Activated CD4-positive, alpha-beta memory T cell treated with anti-CD3 and anti-CD28 coated beads for 36 hours (primary cell): ENCODE measurements at regions of chr17 and their contacts with region 1.

Region 1: GRCh38 chr17:35747540-35748017 is 5.5 kb downstream of the GAS2L2 start:
- DNase-seq: peak; percentile 86
- H3K4me3 Mint-ChIP-seq: no peak overlapping the region
- H3K27ac Mint-ChIP-seq: no peak overlapping the region
- H3K4me1 Mint-ChIP-seq: peaks cover 5% of the 10 kb centered on the region
- H3K27me3 Mint-ChIP-seq: peaks cover 38% of the 10 kb centered on the region

Region 2: DNA sequence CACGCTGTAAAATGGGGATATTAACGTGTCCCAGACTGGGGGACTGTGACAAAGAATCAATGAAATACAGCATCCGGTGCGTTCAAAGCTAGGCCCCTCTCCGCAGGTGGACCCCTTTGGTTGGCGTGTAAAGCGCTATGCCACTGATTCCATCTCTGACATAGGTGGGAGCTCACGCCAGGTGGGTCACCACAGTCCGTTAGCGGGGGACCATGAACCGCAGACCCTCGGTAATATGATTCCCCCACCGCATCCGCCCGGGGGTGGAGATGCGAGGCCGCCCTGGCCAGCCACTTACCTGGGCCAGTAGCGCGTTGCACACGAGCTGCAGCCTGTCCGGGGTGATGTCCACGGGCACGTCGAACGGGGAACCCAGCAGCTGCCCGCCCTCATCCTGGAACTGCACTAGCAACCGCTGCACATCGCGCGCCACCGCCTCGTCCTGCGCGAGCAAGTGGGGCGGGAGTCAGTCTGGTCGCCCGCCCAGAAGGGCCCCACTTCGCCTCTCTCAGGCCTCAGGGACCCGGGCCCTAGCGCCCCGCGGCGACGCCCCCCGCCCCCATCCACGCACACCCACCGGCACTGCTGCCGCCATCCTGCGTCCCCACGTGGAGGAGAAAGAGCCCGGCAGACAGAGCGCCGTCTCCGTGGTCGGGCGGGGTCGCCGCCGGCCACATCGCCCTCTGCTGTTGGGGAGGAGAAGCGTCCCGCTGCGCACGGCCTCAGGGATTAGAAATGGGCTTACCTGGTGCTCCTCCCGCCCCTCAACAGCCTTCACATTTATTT is 605.7 kb before region 1 on chr17 and contains the start of gene NLE1:
- CTCF ChIA-PET with region 1: interaction called, 5 read pairs
- POLR2A ChIA-PET with region 1: no interaction called
- intact Hi-C with region 1: loop called (anchors 10 kb)
- DNase-seq: peak; percentile 93
- H3K4me3 Mint-ChIP-seq: peak within 1 kb of the TSS; percentile 79
- H3K27ac Mint-ChIP-seq: peak within 1 kb of the TSS; percentile 74
- H3K4me1 Mint-ChIP-seq: peaks cover 16% of the 10 kb centered on the region
- H3K27me3 Mint-ChIP-seq: no peaks in the 10 kb centered on the region
- total RNA-seq, gene NLE1: 29.9 to 31.4 TPM

Region 3: GRCh38 chr17:35603674-35604073 is 143.9 kb before region 1 on chr17:
- CTCF ChIA-PET with region 1: interaction called, 16 read pairs
- POLR2A ChIA-PET with region 1: no interaction called
- intact Hi-C with region 1: no loop called
- DNase-seq: no peak
- H3K4me3 Mint-ChIP-seq: no peak overlapping the region
- H3K27ac Mint-ChIP-seq: no peak overlapping the region
- H3K4me1 Mint-ChIP-seq: peaks cover 5% of the 10 kb centered on the region
- H3K27me3 Mint-ChIP-seq: no peaks in the 10 kb centered on the region

Region 4: DNA sequence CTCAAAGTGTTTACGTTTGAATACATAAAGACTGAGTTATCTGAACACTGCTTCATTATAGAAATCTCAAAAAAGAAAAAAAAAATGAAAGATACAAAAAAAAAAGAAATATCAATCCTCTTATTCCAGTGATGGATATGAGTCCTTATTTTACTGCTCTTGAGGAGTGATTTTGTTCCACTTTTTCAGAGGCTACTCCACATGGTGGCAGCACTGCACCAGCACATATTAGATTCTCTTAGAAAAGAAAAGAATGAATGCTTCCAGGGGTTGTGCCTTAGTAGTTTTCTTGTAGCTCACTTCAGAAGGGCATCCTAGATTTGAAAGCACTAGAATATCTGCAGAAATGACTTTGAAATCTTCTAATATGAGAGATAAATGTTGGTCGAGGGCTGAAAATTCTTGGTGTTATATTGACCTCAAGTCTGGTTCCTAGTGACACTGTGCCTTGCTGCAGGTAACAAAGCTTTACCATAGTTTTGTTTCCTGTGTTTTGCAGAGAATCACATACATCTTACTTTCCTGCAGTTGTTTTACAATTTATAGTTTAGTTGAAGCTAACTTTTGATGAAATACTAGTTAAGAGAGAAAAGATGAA is 134.6 kb before region 1 on chr17:
- CTCF ChIA-PET with region 1: interaction called, 131 read pairs
- POLR2A ChIA-PET with region 1: no interaction called
- intact Hi-C with region 1: loop called (anchors 1 kb)
- DNase-seq: peak; percentile 47
- H3K4me3 Mint-ChIP-seq: no peak overlapping the region
- H3K27ac Mint-ChIP-seq: no peak overlapping the region
- H3K4me1 Mint-ChIP-seq: no peaks in the 10 kb centered on the region
- H3K27me3 Mint-ChIP-seq: no peaks in the 10 kb centered on the region

Region 5: DNA sequence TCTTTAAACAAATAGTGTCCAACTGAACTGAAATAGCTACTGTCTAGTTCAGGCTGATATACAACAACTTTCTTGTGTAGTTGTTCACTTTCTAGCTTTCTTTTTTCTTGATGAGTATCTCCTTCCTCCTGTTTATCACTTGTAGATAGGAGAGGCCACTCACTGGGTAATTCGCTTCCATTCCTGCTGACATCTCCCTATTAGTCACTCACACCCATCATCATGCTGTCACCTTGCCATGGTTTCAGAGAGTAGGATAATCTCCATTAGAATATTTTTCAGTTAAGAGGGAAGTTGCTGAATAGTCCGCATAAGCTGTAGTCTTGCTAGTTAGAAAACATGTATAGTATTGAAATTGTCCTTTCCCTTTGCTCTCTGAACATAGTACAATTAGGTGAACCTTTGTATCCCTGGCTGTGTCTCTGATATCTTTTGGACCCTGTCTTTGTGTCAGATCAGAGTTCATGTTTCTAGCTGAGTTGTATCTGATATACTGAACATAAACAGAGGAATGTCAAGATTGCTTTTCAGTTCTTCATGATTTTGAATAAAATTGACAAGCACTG is 80.5 kb before region 1 on chr17:
- CTCF ChIA-PET with region 1: interaction called, 10 read pairs
- POLR2A ChIA-PET with region 1: no interaction called
- intact Hi-C with region 1: no loop called
- DNase-seq: no peak
- H3K4me3 Mint-ChIP-seq: no peak overlapping the region
- H3K27ac Mint-ChIP-seq: no peak overlapping the region
- H3K4me1 Mint-ChIP-seq: no peaks in the 10 kb centered on the region
- H3K27me3 Mint-ChIP-seq: no peaks in the 10 kb centered on the region

Region 6: DNA sequence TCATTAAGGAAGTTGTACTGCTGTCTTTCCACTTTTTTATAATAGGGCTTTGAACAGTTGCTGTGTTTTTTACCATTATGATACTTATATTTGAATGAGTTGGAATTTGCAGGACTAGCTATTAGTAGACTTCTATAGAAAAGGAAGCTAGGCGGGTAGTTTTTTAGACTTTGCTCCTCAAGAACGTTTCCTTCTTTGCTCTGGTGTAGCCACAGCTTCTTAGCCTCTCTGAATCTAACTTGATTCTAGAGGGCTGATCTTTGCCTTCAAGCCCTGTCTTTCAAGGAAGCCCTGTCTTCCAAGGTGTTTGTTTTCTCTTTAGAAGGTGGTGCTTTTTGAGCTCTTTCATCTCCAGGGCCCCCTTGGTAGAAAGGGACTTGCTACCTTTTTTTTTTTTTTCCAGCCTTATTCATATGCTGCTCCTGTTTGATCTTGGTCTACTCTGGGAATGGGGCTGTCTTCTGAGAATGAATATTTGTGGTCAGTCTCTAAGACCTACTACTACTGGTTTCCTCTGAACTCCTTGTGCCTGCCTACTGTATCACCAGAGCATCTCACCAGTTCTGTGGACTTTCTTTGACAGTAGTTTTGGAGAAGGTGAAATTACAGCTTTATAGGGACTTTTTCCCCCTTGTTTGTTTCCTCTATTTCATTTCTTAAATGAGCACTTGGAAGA is 68.4 kb before region 1 on chr17:
- CTCF ChIA-PET with region 1: interaction called, 11 read pairs
- POLR2A ChIA-PET with region 1: no interaction called
- intact Hi-C with region 1: no loop called
- DNase-seq: no peak
- H3K4me3 Mint-ChIP-seq: no peak overlapping the region
- H3K27ac Mint-ChIP-seq: no peak overlapping the region
- H3K4me1 Mint-ChIP-seq: peaks cover 12% of the 10 kb centered on the region
- H3K27me3 Mint-ChIP-seq: no peaks in the 10 kb centered on the region

Region 7: GRCh38 chr17:35726127-35726952 is 21.2 kb before region 1 on chr17:
- CTCF ChIA-PET with region 1: interaction called, 12 read pairs
- POLR2A ChIA-PET with region 1: interaction called, 3 read pairs
- intact Hi-C with region 1: no loop called
- DNase-seq: no peak
- H3K4me3 Mint-ChIP-seq: no peak overlapping the region
- H3K27ac Mint-ChIP-seq: no peak overlapping the region
- H3K4me1 Mint-ChIP-seq: peaks cover 10% of the 10 kb centered on the region
- H3K27me3 Mint-ChIP-seq: no peaks in the 10 kb centered on the region